HCT116 (cell line): ENCODE measurements at regions of chr6 and their contacts with region 1.

Region 1: GRCh38 chr6:30489081-30490025 is at the start of gene HLA-E:
- DNase-seq: peak; percentile 99
- ATAC-seq: peak; percentile 88
- H3K4me3 ChIP-seq: peak within 1 kb of the TSS; percentile 90
- H3K27ac ChIP-seq: peak within 1 kb of the TSS; percentile 94
- H3K4me1 ChIP-seq: peaks cover 8 to 17% of the 10 kb centered on the region in 2 experiments
- H3K27me3 ChIP-seq: no peaks in the 10 kb centered on the region
- CTCF ChIP-seq: no peak
- POLR2A ChIP-seq: peak; percentile 92
- RAD21 ChIP-seq: no peak
- total RNA-seq, gene HLA-E: 108 TPM

Region 2: DNA sequence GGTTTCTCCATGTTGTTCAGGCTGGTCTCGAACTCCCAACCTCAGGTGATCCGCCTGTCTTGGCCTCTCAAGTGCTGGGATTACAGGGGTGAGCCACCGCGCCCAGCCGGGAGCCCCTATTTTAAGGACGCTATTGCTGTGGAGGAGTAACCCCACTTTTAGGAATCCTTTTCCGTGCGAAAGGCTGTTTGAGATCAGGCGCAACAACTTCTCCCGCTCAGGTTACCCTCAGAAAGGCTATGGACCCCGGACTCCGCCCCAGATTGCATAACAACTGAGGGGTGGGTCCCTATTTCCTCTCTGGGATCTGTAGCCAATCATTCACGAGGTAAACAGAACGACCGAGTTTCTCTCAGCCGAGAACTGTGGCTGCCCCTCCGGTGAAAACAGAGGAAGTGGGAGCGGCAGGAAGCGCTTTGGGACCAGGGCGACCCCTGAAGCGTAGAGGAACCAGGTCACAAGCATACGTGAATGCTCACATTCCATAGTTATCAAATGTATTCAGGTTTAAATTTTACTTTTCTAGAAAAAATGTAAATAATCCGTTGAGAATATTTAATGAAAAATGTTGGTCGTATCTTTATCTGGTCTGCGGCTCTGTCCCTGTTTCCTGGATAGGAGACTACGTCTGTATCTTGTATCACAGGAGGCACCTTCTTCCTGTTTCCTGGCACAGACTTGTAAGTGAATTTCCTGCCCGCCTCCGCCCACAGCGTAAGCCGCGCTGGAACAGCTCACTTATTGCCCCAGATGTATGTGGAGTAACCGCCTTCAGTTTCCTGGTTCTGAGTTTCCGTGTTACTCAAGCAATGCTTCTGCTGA is 26.8 kb after region 1 on chr6:
- CTCF ChIA-PET with region 1: no interaction called
- POLR2A ChIA-PET with region 1: no interaction called
- RAD21 ChIA-PET with region 1: no interaction called
- intact Hi-C with region 1: loop called (anchors 1 kb)
- DNase-seq: peak; percentile 61
- ATAC-seq: peak; percentile 82
- H3K4me3 ChIP-seq: peak overlapping the region; percentile 42 to 50
- H3K27ac ChIP-seq: peak overlapping the region; percentile 74
- H3K4me1 ChIP-seq: peaks cover 11 to 22% of the 10 kb centered on the region in 2 experiments; a peak in 3 of 4 replicates
- H3K27me3 ChIP-seq: no peaks in the 10 kb centered on the region
- CTCF ChIP-seq: no peak
- POLR2A ChIP-seq: no peak
- RAD21 ChIP-seq: no peak